Dendritic cell treated with granulocyte-macrophage colony-stimulating factor and Interleukin-4, amounts not matched to agents 40 ng/mL and 50 ng/mL, for 4 days (primary cell): ENCODE measurements at regions of chr15 and their contacts with region 1.

Region 1: GRCh38 chr15:90648137-90649070 is 68.7 kb upstream of the BLM start:
- H3K4me3 Mint-ChIP-seq: peak overlapping the region; percentile 43
- H3K27ac Mint-ChIP-seq: peak overlapping the region; percentile 92
- H3K4me1 Mint-ChIP-seq: peaks cover 71% of the 10 kb centered on the region
- H3K27me3 Mint-ChIP-seq: no peaks in the 10 kb centered on the region

Region 2: DNA sequence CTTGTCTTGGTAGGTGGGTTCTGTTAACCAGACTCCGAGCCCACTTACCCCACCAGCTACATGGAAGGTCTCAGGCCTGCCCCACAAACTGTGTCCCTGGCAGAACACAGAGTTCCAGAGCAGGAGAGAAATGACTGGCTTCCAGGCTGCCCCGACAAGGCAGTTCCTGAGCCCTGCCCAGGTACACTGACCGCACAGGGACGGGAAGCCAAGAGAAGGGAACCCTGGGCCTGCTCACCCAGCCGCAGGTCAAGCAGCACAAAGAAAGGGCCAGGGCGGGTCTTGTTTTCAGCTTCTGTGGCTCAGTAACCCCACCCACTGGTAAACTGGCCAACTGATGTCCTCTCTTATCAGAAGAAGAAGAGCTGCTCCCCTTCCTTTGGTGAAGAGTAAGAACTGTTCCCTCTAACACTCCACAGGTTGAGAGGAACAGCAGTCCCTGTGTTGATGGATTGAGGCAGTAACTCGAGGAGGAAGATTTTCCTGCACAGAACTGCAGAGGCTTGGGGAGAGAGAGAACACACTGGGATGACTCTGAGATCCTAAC is 50.3 kb before region 1 on chr15:
- intact Hi-C with region 1: no loop called
- H3K4me3 Mint-ChIP-seq: no peak overlapping the region
- H3K27ac Mint-ChIP-seq: peak overlapping the region; percentile 78
- H3K4me1 Mint-ChIP-seq: peaks cover 68% of the 10 kb centered on the region
- H3K27me3 Mint-ChIP-seq: no peaks in the 10 kb centered on the region

Region 3: DNA sequence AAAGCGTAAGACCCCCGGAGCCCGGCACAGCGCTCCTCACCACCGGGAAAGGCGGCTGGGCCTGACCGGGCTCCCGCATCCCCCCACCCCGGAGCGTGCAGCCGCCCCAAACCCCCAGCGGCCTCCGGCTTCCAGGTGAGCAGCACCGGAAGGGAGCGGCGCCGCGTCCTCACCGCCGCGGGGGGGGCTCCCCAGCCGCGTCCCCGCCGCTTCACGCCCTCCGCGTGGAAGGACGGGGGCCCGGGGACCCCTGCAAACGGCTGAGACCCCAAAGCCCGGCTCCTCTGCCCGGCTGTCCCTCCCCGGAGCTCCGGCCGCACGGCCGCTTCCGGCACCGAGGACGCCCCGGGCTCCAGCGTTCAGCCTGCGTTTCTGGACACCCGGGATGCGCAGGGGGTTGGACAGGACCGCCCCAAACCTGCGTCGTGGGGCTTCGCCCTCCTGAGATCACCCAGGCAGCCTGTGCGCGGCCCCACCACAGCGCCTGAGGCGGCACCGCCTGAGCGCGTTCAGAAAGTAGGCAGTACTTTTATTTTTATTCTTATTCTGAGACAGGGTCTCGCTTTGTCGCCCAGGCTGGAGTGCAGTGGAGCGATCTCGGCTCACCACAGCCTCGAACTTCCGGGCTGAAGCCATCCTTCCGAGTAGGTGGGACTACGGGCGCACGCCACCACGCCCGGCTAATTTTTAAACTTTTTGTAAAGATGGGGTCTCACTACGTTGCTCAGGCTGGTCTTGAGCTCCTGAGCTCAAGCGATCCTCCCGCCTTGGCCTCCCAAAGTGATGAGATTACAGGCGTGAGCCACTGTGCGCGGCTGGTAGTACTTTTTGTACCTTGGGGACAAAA is 17.1 kb after region 1 on chr15:
- intact Hi-C with region 1: loop called (anchors 2 kb)
- H3K4me3 Mint-ChIP-seq: peak overlapping the region; percentile 85
- H3K27ac Mint-ChIP-seq: peak overlapping the region; percentile 97
- H3K4me1 Mint-ChIP-seq: peaks cover 49% of the 10 kb centered on the region
- H3K27me3 Mint-ChIP-seq: peaks cover 3% of the 10 kb centered on the region

Region 4: GRCh38 chr15:90691982-90692773 is 43.8 kb after region 1 on chr15:
- intact Hi-C with region 1: loop called (anchors 1 kb)
- H3K4me3 Mint-ChIP-seq: no peak overlapping the region
- H3K27ac Mint-ChIP-seq: peak overlapping the region; percentile 74
- H3K4me1 Mint-ChIP-seq: peaks cover 20% of the 10 kb centered on the region
- H3K27me3 Mint-ChIP-seq: no peaks in the 10 kb centered on the region